ENCODE measurements at regions of chr10 and their contacts with region 1.

Region 1: DNA sequence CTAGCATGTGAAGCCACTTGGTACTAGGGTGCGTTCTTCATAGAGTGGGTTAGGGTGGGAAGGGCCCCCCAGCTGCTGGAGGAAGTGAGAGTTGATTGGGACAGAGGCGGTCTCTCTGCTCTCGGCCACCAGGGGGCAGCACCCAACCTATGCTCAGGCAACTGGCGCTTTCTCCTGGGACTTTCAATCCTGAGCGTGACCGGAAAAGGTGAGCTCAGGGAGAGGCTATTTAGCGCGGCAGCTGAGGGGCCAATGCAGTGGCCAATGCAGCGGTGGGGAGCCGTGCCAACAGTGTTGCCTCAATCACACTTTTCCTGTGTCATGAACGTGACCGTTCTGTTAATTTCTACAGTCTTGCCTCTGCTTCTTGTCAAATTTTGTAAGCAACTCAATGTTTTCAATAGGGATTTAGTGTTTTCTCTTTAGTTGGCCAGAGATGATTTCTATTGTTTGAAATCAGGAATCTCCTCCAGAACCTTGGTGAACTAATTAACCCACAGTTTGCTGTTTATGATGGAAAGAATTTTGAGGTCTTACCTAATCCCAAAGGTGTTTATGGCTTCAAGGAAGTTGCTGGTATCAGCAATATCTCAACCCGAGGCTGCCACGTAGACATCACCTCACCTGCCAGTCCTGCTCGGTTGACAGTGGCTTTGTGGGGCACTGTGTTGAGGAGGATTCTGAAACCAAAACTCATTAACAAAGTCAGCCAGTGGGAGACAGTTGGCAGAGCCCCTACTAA is 67.9 kb upstream of the PDZD8 start:
- H3K4me3 ChIP-seq: no peak overlapping the region
- H3K27ac ChIP-seq: no peak overlapping the region
- H3K4me1 ChIP-seq: peaks cover 7% of the 10 kb centered on the region
- CTCF ChIP-seq: peak; percentile 90

Region 2: DNA sequence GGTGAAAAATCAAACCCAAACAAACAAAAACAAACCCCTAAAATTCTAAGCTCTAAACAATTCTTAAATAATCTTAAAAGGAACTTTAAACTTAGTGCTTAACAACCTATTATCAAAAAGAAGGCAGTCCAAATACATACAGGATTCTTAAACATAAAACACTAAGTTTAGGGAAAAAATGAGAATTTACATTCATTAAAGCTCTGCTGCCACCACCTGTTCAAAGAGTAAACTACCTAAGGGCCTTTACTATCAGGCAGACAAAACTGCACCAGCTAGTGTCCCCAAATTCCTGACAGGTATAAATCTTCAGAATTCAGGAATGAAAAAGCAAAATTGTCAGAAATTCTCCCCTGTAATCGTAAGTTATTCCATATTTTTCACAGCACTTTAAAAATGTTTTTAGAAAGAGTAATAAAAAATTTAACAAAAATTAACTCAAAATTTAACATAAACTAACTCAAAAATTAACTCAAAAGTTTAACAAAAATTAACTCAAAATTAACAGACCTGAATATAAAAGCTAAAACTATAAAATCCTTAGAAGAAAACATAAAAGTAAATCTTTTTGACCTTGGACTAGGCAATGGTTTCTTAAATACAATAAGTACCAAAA is 123.0 kb before region 1 on chr10:
- CTCF ChIA-PET with region 1: interaction called, 16 read pairs
- POLR2A ChIA-PET with region 1: no interaction called
- H3K4me3 ChIP-seq: no peak overlapping the region
- H3K27ac ChIP-seq: no peak overlapping the region
- H3K4me1 ChIP-seq: peaks cover 9% of the 10 kb centered on the region
- CTCF ChIP-seq: peak; percentile 34; the same call in 1 of the 2 replicates

Region 3: DNA sequence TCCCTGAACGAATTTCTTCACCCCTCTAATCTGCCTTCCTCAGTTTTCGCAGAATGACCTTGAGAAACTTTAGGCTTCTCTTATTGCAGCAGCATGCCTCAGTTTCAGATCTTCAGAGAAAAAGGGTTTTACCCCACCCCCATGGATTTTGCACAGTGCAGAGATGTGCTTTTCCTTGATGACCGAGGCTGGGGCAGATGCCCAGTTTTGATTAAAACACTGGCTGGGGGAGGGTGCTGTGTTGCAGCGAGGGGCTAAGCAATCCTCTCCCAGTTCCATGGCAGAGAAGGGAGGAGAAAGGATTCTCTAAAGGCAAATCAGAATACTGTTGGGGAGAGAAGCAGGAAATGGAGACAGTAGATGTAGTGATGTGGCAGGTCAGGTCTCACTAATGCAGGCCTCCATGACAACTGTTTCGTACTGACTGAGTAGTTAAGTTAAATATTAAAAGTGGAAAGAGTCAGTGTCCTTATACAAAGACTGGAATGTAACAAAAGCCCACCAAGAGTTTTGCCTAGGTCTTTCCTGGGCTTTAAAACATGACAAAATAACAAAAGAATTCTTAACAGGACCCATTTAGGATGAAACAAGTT is 17.0 kb before region 1 on chr10:
- CTCF ChIA-PET with region 1: interaction called, 65 read pairs
- POLR2A ChIA-PET with region 1: interaction called, 3 read pairs
- H3K4me3 ChIP-seq: no peak overlapping the region
- H3K27ac ChIP-seq: no peak overlapping the region
- H3K4me1 ChIP-seq: no peaks in the 10 kb centered on the region
- CTCF ChIP-seq: no peak

Region 4: DNA sequence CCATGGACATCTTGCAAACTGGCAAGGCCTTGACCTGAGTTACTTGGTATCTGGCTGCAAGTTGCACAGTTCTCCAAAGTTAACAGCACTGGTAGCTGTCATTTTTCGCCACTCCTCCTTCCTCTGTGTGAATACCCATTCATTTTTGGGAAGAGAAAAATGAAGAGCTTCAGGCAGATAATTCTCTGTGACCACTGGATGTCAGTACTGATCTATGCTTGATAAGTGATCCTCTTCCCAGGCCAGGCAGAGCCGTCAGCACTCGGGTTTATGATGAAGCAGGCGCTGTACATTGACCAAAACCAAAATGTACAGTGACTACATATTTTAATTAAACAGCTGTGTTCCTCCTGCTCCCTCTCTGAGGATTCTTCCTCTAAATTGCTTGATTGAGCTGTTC is 12.0 kb before region 1 on chr10:
- CTCF ChIA-PET with region 1: interaction called, 65 read pairs
- POLR2A ChIA-PET with region 1: interaction called, 3 read pairs
- H3K4me3 ChIP-seq: no peak overlapping the region
- H3K27ac ChIP-seq: no peak overlapping the region
- H3K4me1 ChIP-seq: no peaks in the 10 kb centered on the region
- CTCF ChIP-seq: 0 out of 2 replicates have a peak, but pooled peaks have one; percentile 17

Region 5: GRCh38 chr10:117461766-117462423 is 18.8 kb after region 1 on chr10:
- CTCF ChIA-PET with region 1: interaction called, 26 read pairs
- POLR2A ChIA-PET with region 1: interaction called, 3 read pairs
- H3K4me3 ChIP-seq: no peak overlapping the region
- H3K27ac ChIP-seq: no peak overlapping the region; the same call in 1 of the 2 replicates
- H3K4me1 ChIP-seq: peaks cover 8% of the 10 kb centered on the region
- CTCF ChIP-seq: no peak

Region 6: GRCh38 chr10:117483056-117483604 is 40.0 kb after region 1 on chr10:
- CTCF ChIA-PET with region 1: interaction called, 16 read pairs
- POLR2A ChIA-PET with region 1: no interaction called
- H3K4me3 ChIP-seq: no peak overlapping the region
- H3K27ac ChIP-seq: no peak overlapping the region
- H3K4me1 ChIP-seq: no peaks in the 10 kb centered on the region
- CTCF ChIP-seq: no peak

Region 7: DNA sequence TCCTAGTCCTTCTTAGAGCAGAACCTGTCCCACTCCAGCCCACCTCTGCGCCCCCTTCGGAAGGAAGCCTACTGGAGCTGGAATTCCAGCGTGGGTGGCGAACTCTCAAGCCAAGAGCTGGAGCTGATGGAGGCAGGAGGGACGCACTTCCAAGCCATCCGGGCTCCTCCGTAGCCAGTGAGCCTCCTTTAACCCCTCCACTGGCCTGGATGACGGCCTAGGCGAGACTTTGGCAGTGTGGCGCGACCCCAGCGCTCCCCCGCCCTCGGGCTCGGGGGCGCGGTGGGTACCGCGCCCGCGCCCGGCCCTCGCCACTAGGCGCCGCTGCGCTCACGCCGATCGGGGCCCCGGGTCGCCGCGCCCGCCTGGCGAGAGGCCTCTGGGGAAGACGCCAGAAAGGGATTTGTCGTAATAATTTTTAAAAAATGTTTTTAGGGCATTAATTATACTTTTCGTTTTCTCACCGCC is 94.4 kb after region 1 on chr10:
- CTCF ChIA-PET with region 1: interaction called, 13 read pairs
- POLR2A ChIA-PET with region 1: interaction called, 3 read pairs
- H3K4me3 ChIP-seq: peak overlapping the region; percentile 14; the same call in 1 of the 2 replicates
- H3K27ac ChIP-seq: no peak overlapping the region
- H3K4me1 ChIP-seq: peaks cover 5% of the 10 kb centered on the region
- CTCF ChIP-seq: no peak